HepG2 (cell line): ENCODE measurements at regions of chr1 and their contacts with region 1.

Region 1: GRCh38 chr1:205775015-205775716 is at the start of gene RAB29:
- DNase-seq: peak; percentile 59
- ATAC-seq: peak; percentile 96
- H3K4me3 ChIP-seq: peak within 1 kb of the TSS; percentile 65 to 93 (median 81)
- H3K27ac ChIP-seq: no peak within 1 kb of the TSS
- H3K4me1 ChIP-seq: peaks cover 22% of the 10 kb centered on the region
- H3K27me3 ChIP-seq: peaks cover 0 to 8% of the 10 kb centered on the region in 2 experiments; a peak in 2 of 5 replicates
- CTCF ChIP-seq: no peak; the same call in 1 of the 2 replicates
- EP300 ChIP-seq: no peak
- POLR2A ChIP-seq: no peak; a peak in 1 of 4 replicates
- RAD21 ChIP-seq: 0 out of 2 replicates have a peak, but pooled peaks have one; percentile 17
- total RNA-seq, gene RAB29: 10.1 and 13.1 TPM in 2 replicates

Region 2: GRCh38 chr1:205750138-205751035 is 24.8 kb before region 1 on chr1 and contains the start of gene NUCKS1:
- CTCF ChIA-PET with region 1: no interaction called
- POLR2A ChIA-PET with region 1: interaction called, 21 read pairs
- in situ Hi-C with region 1: no loop called
- intact Hi-C with region 1: no loop called
- DNase-seq: peak; percentile 99
- ATAC-seq: peak; percentile 88
- H3K4me3 ChIP-seq: peak within 1 kb of the TSS; percentile 65 to 81 (median 75)
- H3K27ac ChIP-seq: peak within 1 kb of the TSS; percentile 92
- H3K4me1 ChIP-seq: peaks cover 75% of the 10 kb centered on the region
- H3K27me3 ChIP-seq: no peaks in the 10 kb centered on the region; a peak in 1 of 5 replicates
- CTCF ChIP-seq: no peak
- EP300 ChIP-seq: peak in 1 of 2 experiments; percentile 56; a peak in 2 of 4 replicates
- POLR2A ChIP-seq: no peak; a peak in 1 of 4 replicates
- RAD21 ChIP-seq: no peak
- total RNA-seq, gene NUCKS1: 117 and 194 TPM in 2 replicates

Region 3: GRCh38 chr1:205805082-205805712 is 30.0 kb after region 1 on chr1:
- CTCF ChIA-PET with region 1: no interaction called
- POLR2A ChIA-PET with region 1: no interaction called
- in situ Hi-C with region 1: no loop called
- intact Hi-C with region 1: no loop called
- DNase-seq: no peak
- ATAC-seq: no peak
- H3K4me3 ChIP-seq: no peak overlapping the region
- H3K27ac ChIP-seq: no peak overlapping the region
- H3K4me1 ChIP-seq: peaks cover 7% of the 10 kb centered on the region
- H3K27me3 ChIP-seq: peaks cover 0 to 4% of the 10 kb centered on the region in 2 experiments; a peak in 2 of 5 replicates
- CTCF ChIP-seq: no peak
- EP300 ChIP-seq: no peak
- POLR2A ChIP-seq: no peak
- RAD21 ChIP-seq: no peak

Region 4: DNA sequence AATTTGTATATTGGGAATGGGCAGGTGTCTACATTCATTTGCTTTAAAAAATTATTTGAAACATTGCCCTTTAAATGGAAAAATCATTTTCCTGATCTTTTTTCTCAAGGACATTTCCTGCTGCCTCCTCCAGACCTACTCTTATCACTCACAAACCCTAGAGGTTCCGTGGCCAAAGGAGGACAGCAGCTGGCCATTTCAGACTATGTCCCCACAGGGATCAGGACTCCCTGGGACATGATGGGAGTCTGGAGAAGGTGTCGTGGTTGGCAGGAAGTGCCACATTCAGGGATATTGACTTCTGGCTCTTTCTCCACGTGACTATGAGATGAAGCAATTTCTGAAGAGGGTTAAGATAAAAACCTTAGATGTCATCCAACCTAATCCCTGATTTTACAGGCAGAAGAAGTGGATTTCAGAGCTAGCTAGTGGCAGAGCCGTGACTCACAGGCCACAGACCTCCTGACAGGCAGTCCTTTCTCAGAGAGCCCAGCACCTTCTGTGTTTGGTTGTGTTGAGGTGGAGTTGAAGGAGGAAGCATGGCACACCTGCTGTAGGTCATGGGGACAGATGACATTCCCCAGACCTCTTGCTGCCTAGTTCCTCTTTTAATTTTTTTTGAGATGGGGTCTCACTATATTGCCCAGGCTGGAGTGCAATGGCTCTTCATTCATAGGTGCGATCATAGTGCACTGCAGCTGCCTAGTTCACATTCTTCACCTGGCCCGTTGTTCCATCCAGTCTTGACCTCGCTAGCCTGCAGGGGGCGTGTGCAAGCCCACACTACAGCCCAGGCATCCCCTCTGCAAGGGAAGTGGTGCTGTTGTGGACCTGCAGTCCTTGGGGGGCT is 1022.6 kb after region 1 on chr1:
- CTCF ChIA-PET with region 1: no interaction called
- POLR2A ChIA-PET with region 1: no interaction called
- in situ Hi-C with region 1: no loop called
- intact Hi-C with region 1: no loop called
- DNase-seq: no peak
- ATAC-seq: peak; percentile 83
- H3K4me3 ChIP-seq: no peak overlapping the region
- H3K27ac ChIP-seq: no peak overlapping the region
- H3K4me1 ChIP-seq: no peaks in the 10 kb centered on the region
- H3K27me3 ChIP-seq: no peaks in the 10 kb centered on the region; a peak in 1 of 5 replicates
- CTCF ChIP-seq: peak; percentile 67
- EP300 ChIP-seq: no peak
- POLR2A ChIP-seq: no peak
- RAD21 ChIP-seq: no peak